ENCODE measurements at regions of chr13 and their contacts with region 1.

Region 1: DNA sequence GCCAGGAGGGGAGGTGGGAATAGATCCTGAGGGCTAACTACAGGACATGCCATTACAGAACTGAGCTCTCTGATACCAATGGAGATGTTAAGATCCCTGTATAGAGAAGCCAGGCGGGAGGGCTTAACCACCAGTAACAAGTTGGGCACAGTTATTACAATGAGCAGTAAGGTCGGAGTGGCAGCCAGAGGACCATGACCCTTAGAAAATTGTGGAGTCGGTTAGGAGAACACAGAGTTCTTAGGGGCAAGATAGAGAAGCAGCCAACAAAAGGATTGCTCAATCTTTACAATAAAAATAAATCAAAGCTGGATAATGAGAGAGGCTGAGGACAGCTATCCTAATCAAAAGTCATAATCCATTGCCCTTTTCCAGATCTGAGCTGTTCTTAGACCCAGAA is 10.4 kb downstream of the CPB2 start:
- DNase-seq: no peak
- ATAC-seq: no peak

Region 2: DNA sequence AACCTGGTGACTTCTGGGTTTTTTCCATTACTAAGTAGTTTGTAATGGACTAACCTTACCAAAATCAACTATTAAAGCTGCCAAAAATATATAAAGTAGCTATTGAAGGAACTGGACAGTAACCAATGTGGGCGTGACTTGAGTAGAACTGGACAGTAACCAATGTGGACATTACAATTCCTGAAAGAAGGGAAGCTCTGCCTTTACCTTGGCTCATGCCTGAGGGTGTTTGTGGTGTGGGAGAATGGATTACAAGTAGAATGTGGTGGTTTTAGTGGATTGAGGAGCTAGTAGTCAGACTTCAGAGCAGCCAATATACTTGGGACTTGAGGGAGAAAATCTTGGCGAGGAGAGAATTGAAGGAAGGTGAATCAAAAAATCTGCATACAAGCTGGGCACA is 134.8 kb after region 1 on chr13:
- intact Hi-C with region 1: no loop called
- DNase-seq: no peak
- ATAC-seq: no peak

Region 3: DNA sequence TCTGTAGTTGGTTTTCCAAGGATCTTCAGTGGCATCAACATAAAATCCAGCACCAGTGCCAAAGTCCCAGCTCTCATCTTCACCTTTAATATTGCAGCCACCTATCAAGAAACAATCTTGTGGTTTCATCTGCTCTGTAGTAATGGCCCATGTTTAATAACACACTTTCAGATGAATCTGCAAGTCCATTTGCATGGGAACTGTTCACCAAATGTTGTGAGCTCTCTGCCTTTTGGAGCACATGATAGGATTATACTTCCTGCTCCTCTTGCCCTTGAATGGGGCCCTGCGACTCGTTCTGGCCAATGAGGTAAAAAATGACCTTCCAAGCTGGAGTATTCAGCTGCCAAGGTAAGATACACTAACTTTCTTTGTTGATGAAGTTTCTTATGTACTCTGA is 688.2 kb after region 1 on chr13:
- intact Hi-C with region 1: loop called (anchors 5 kb)
- DNase-seq: no peak
- ATAC-seq: no peak